ENCODE measurements at regions of chr2 and their contacts with region 1.

Region 1: GRCh38 chr2:37832590-37833197 is 92.4 kb upstream of the RMDN2 start:
- DNase-seq: peak; percentile 81 to 90
- ATAC-seq: peak; percentile 62 to 89 (median 82)
- H3K4me3 ChIP-seq: no peak overlapping the region
- H3K27ac ChIP-seq: peak overlapping the region in 4 of 10 donors; percentile 75 to 84 (median 81)
- H3K4me1 ChIP-seq: peaks cover 0 to 51% (median 38%) of the 10 kb centered on the region in 9 donors
- H3K27me3 ChIP-seq: no peaks in the 10 kb centered on the region
- CTCF ChIP-seq: peak; percentile 49 to 86 (median 80)

Region 2: GRCh38 chr2:37389989-37390765 is 442.5 kb before region 1 on chr2:
- intact Hi-C with region 1: loop called in 3 of 10 experiments (anchors 5 kb)
- DNase-seq: peak in 1 of 2 donors; percentile 26
- ATAC-seq: peak in 6 of 8 donors; percentile 49 to 90 (median 77)
- H3K4me3 ChIP-seq: no peak overlapping the region
- H3K27ac ChIP-seq: peak overlapping the region in 7 of 10 donors; percentile 14 to 72 (median 48)
- H3K4me1 ChIP-seq: peaks cover 0 to 32% (median 16%) of the 10 kb centered on the region in 9 donors
- H3K27me3 ChIP-seq: no peaks in the 10 kb centered on the region
- CTCF ChIP-seq: no peak

Region 3: GRCh38 chr2:37397166-37397565 is 435.5 kb before region 1 on chr2:
- intact Hi-C with region 1: loop called in 6 of 10 experiments (anchors 1 to 5 kb)
- DNase-seq: no peak
- ATAC-seq: no peak
- H3K4me3 ChIP-seq: no peak overlapping the region
- H3K27ac ChIP-seq: no peak overlapping the region
- H3K4me1 ChIP-seq: peaks cover 0 to 6% (median 0%) of the 10 kb centered on the region in 9 donors
- H3K27me3 ChIP-seq: no peaks in the 10 kb centered on the region
- CTCF ChIP-seq: no peak

Region 4: DNA sequence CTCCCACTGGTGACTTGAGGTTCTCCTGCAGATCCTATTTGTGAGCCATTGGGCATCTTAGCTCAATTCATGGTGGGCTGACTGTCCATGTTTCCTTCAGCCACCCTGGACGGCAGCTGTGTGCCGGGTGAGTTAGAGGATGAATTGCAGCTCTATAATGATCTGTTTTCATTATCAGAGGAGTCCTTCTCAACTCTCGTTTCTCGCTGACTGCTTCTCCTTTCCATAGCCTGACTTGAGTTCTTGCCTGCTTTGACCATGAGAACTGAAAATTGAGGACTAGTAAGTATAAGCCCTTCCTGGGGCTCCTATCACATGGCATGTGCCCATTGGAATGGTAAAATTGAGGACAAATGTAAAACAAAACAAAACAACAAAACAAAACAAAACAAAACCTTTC is 283.1 kb before region 1 on chr2:
- intact Hi-C with region 1: loop called in 1 of 10 experiments (anchors 10 kb)
- DNase-seq: no peak
- ATAC-seq: no peak
- H3K4me3 ChIP-seq: no peak overlapping the region
- H3K27ac ChIP-seq: no peak overlapping the region
- H3K4me1 ChIP-seq: peaks cover 0 to 11% (median 0%) of the 10 kb centered on the region in 9 donors
- H3K27me3 ChIP-seq: no peaks in the 10 kb centered on the region
- CTCF ChIP-seq: no peak

Region 5: DNA sequence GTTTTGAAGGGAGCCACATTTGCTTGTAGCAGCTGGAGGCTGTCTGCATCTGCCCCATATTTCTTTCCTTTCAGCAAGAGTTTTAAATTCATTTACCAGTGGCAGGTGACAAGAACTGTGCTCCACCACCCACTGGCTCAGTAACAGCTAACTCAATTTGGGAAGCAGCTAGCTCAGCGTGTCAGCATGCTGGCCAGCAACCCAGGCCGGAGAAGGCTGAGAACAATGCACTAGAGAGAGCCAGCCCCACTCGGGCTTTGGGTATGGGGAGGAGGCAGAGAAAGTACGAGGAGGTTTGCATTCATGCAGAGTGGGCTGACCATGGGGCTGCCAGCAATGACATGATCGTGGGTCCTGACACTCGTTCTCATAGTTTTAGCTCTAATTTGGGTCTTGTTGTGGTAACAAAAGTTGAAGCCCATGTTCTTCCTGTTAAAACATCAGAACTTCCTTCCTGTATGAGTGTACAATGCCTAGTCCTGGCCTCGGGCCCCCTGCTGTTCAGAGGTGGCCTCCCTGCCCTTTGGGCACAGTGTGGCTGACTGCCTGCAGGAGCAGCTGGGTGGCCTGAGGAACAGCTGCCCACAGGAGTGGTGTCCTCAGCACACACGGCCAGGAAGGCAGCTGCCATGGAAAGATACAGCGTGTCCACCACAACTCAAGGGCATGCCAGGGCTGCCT is 184.2 kb before region 1 on chr2:
- intact Hi-C with region 1: loop called in 1 of 10 experiments (anchors 5 kb)
- DNase-seq: peak; percentile 49 to 74
- ATAC-seq: peak; percentile 65 to 83 (median 78)
- H3K4me3 ChIP-seq: peak overlapping the region in 2 of 10 donors; percentile 7 to 16
- H3K27ac ChIP-seq: peak overlapping the region; percentile 47 to 99 (median 84)
- H3K4me1 ChIP-seq: peaks cover 21 to 100% (median 94%) of the 10 kb centered on the region in 9 donors
- H3K27me3 ChIP-seq: no peaks in the 10 kb centered on the region
- CTCF ChIP-seq: peak; percentile 11 to 59 (median 32)

Region 6: DNA sequence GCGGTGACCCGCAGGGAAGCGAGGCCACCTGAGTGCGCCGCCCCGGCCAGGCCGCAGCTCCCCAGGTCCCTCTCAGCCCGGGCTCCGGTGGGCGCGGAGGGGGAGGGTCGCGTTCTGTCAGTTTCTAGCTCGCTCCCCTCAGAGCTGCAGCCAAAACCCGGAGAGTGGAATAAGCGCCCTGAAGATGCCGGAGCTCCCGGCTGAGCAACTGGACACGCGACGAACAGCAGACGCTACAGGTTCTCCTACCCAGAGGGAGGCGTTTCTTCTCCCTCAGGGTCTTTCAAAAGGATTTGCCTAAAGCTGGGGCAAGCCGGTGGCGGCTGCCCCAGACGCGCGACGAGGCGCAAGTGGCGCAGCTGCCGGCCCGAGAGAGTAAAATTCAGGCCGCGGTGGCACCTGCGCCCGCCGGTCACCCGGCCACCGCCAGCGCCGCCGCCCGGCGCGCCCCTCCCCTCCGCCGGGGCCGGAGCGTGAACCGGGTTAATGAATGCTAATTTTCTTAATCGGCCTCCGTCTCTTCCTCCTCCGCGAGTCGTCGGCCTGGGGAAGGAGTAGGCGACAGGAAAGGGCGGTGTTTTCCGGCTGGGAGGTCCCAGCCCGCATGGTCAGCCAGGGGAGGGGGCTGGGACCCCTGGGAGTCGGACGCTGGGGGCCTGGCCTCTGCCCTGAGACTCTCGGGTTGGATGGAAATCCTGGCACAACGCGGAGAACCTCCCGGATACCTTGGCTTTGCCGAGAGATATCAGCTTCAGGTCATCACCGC is 160.4 kb before region 1 on chr2:
- intact Hi-C with region 1: loop called in 8 of 10 experiments (anchors 2 to 10 kb)
- DNase-seq: peak; percentile 79 to 83
- ATAC-seq: peak; percentile 72 to 87 (median 76)
- H3K4me3 ChIP-seq: peak overlapping the region; percentile 78 to 99 (median 95)
- H3K27ac ChIP-seq: peak overlapping the region; percentile 91 to 100 (median 99)
- H3K4me1 ChIP-seq: peaks cover 3 to 61% (median 30%) of the 10 kb centered on the region in 9 donors
- H3K27me3 ChIP-seq: no peaks in the 10 kb centered on the region
- CTCF ChIP-seq: peak in 2 of 9 donors; percentile 8 to 12

Region 7: GRCh38 chr2:37871456-37872191 is 38.9 kb after region 1 on chr2:
- intact Hi-C with region 1: loop called in 8 of 10 experiments (anchors 2 to 10 kb)
- DNase-seq: no peak
- ATAC-seq: peak in 7 of 8 donors; percentile 3 to 52 (median 40)
- H3K4me3 ChIP-seq: no peak overlapping the region
- H3K27ac ChIP-seq: peak overlapping the region in 7 of 10 donors; percentile 43 to 84 (median 74)
- H3K4me1 ChIP-seq: peaks cover 16 to 94% (median 74%) of the 10 kb centered on the region in 9 donors
- H3K27me3 ChIP-seq: no peaks in the 10 kb centered on the region
- CTCF ChIP-seq: no peak